ENCODE measurements at regions of chr10 and their contacts with region 1.

Region 1: GRCh38 chr10:16505161-16505560 is 16.5 kb downstream of the C1QL3 start:
- DNase-seq: no peak
- ATAC-seq: no peak
- H3K4me3 ChIP-seq: no peak overlapping the region
- H3K27ac ChIP-seq: no peak overlapping the region
- H3K4me1 ChIP-seq: no peaks in the 10 kb centered on the region
- H3K27me3 ChIP-seq: no peaks in the 10 kb centered on the region
- CTCF ChIP-seq: no peak

Region 2: DNA sequence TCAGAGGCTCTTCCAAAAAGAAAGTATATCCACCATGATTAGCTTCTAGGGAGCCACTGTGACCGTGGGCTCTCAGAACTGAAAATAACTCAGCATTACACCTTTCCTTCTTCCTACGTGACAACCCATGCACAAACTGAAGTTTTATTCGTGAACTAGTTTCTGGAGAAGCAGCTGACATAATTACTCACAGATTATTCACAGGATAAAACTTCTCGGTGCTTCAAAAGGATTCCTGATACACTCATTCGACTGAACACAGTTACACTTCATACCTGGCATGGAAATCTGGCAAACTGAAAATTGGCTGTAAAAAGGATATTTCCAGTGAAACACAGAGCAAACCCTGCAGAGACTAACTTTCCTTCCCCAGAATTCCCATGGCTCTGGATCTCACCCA is 207.5 kb before region 1 on chr10:
- intact Hi-C with region 1: loop called (anchors 5 kb)
- DNase-seq: no peak
- ATAC-seq: no peak
- H3K4me3 ChIP-seq: no peak overlapping the region
- H3K27ac ChIP-seq: no peak overlapping the region
- H3K4me1 ChIP-seq: no peaks in the 10 kb centered on the region
- H3K27me3 ChIP-seq: no peaks in the 10 kb centered on the region
- CTCF ChIP-seq: no peak